ENCODE measurements at regions of chr2 and their contacts with region 1.

Region 1: DNA sequence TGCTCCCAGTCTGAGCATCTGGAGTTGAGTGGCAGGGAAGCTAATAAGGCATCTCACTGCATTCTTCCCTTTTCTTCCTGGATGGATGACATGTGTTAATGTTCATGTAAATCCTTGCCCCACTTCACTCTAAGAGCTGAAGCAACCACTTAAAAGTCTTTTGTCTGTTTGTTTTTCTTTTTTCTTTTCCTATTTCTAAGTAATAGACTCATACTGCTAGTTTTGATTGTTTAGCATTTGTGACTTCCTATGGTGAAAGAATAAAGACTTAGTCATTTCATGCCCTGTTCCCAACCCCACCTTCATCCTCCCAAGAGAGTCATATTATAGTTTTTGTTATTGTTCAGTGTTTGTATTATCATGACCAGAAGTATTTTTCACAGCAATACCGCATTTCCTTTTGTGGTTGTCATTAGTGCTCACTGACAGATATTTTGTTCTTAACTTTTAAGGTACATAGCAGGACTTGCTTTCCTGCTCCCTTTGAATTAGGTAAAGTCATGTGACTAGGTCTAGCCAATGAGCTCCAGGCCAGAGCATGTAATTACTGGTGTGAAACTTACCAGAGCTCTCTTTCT is 18.1 kb upstream of the SPP2 start:
- DNase-seq: peak; percentile 67 to 87 (median 82)
- H3K4me3 ChIP-seq: no peak overlapping the region
- H3K4me3 Mint-ChIP-seq: peak overlapping the region; percentile 1 to 64 (median 38)
- H3K27ac ChIP-seq: no peak overlapping the region
- H3K27ac Mint-ChIP-seq: peak overlapping the region; percentile 56 to 91 (median 79)
- H3K4me1 ChIP-seq: peaks cover 60% of the 10 kb centered on the region
- H3K4me1 Mint-ChIP-seq: peaks cover 38 to 64% (median 49%) of the 10 kb centered on the region in 4 donors
- H3K27me3 ChIP-seq: no peaks in the 10 kb centered on the region
- H3K27me3 Mint-ChIP-seq: peaks cover 0 to 1% of the 10 kb centered on the region in 2 donors

Region 2: DNA sequence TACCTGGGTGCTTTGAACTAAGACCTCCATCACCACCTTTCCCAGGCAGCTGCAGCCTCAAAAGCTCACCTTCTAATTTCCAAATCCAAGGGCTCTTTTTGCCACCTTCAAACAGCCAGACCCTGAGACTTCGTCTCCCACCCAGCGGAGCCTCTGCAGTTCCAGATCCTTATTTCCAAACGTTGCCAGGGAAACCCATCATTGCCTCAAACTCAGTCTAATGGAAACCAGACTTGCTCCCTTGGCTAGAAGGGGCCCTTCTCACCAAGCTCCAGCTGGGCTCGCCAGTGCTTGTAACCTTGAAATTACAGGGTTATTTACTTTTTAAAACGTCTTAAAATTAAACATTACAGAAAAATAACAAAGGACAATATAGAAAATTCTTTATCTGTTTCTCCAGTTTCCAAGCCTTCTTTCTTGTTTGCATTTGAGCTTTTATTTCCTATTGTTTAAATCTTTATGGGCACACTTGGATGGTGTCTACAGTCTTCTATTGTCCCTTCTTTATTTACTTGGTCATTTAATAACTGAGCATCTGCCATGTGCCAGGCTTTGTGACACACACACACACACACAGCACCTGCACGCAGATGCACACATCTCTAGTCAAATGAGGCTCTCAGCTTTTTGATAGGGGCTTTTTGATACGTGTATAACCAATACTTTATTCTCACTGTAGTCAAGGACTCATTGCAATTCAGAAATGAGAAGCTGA is 79.1 kb before region 1 on chr2:
- CTCF ChIA-PET with region 1: no interaction called
- POLR2A ChIA-PET with region 1: no interaction called
- intact Hi-C with region 1: no loop called
- DNase-seq: no peak
- H3K4me3 ChIP-seq: no peak overlapping the region
- H3K4me3 Mint-ChIP-seq: no peak overlapping the region
- H3K27ac ChIP-seq: no peak overlapping the region
- H3K27ac Mint-ChIP-seq: no peak overlapping the region
- H3K4me1 ChIP-seq: no peaks in the 10 kb centered on the region
- H3K4me1 Mint-ChIP-seq: no peaks in the 10 kb centered on the region
- H3K27me3 ChIP-seq: peaks cover 3% of the 10 kb centered on the region
- H3K27me3 Mint-ChIP-seq: peaks cover 15 to 31% of the 10 kb centered on the region in 2 donors

Region 3: DNA sequence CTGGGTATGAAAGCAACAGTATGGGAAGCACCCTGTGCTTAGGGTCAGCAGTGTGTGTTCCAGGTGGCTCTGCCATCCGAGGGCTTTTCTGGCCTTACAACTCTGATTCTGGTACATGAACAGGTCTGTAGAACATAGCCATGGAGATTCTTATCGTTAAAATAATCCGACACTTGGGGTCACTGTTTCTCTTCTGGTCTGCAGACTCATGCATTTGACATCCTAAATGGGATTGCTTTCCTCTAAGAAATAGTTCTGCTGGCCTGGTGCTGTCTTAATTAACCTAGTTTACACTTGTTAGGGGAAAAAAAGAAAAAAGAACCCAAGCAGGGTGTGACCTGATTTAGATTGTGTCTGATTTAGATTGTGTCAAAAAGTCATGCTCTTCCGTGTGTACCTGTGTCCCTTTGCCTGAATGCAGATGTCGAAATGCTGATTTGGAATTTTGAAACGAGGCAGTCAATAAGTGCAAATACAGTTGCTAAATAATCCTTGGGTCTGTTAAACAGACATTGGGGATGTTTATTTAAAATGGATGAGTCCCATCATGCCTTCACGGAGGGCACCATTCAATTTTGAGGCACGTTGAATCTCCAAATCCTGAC is 55.6 kb before region 1 on chr2:
- CTCF ChIA-PET with region 1: interaction called, 9 read pairs
- POLR2A ChIA-PET with region 1: interaction called, 6 read pairs
- intact Hi-C with region 1: loop called (anchors 5 kb)
- DNase-seq: peak; percentile 40 to 69 (median 66)
- H3K4me3 ChIP-seq: no peak overlapping the region
- H3K4me3 Mint-ChIP-seq: peak overlapping the region in 6 of 8 donors; percentile 1 to 66 (median 27)
- H3K27ac ChIP-seq: no peak overlapping the region
- H3K27ac Mint-ChIP-seq: peak overlapping the region in 6 of 7 donors; percentile 9 to 83 (median 48)
- H3K4me1 ChIP-seq: peaks cover 24% of the 10 kb centered on the region
- H3K4me1 Mint-ChIP-seq: peaks cover 25 to 38% (median 27%) of the 10 kb centered on the region in 4 donors
- H3K27me3 ChIP-seq: no peaks in the 10 kb centered on the region
- H3K27me3 Mint-ChIP-seq: no peaks in the 10 kb centered on the region

Region 4: GRCh38 chr2:234015861-234016260 is 16.5 kb before region 1 on chr2:
- CTCF ChIA-PET with region 1: no interaction called
- POLR2A ChIA-PET with region 1: no interaction called
- intact Hi-C with region 1: no loop called
- DNase-seq: no peak
- H3K4me3 ChIP-seq: no peak overlapping the region
- H3K4me3 Mint-ChIP-seq: no peak overlapping the region
- H3K27ac ChIP-seq: no peak overlapping the region
- H3K27ac Mint-ChIP-seq: no peak overlapping the region
- H3K4me1 ChIP-seq: no peaks in the 10 kb centered on the region
- H3K4me1 Mint-ChIP-seq: peaks cover 4 to 11% (median 5%) of the 10 kb centered on the region in 4 donors
- H3K27me3 ChIP-seq: no peaks in the 10 kb centered on the region
- H3K27me3 Mint-ChIP-seq: no peaks in the 10 kb centered on the region

Region 5: GRCh38 chr2:234102112-234102511 is 69.7 kb after region 1 on chr2:
- CTCF ChIA-PET with region 1: interaction called, 4 read pairs
- POLR2A ChIA-PET with region 1: interaction called, 7 read pairs
- intact Hi-C with region 1: loop called (anchors 1 kb)
- DNase-seq: peak in 4 of 5 donors; percentile 27 to 49 (median 48)
- H3K4me3 ChIP-seq: peak overlapping the region in 1 of 2 donors; percentile 18
- H3K4me3 Mint-ChIP-seq: peak overlapping the region in 6 of 8 donors; percentile 14 to 77 (median 52)
- H3K27ac ChIP-seq: no peak overlapping the region
- H3K27ac Mint-ChIP-seq: peak overlapping the region; percentile 1 to 80 (median 62)
- H3K4me1 ChIP-seq: peaks cover 37% of the 10 kb centered on the region
- H3K4me1 Mint-ChIP-seq: peaks cover 38 to 57% (median 44%) of the 10 kb centered on the region in 4 donors
- H3K27me3 ChIP-seq: no peaks in the 10 kb centered on the region
- H3K27me3 Mint-ChIP-seq: no peaks in the 10 kb centered on the region